ENCODE measurements at regions of chr18 and their contacts with region 1.

Region 1: GRCh38 chr18:48475635-48476549 is 62.9 kb upstream of the CTIF start:
- DNase-seq: peak; percentile 83
- H3K4me3 ChIP-seq: no peak overlapping the region
- H3K27ac ChIP-seq: no peak overlapping the region
- H3K4me1 ChIP-seq: peaks cover 20% of the 10 kb centered on the region
- H3K27me3 ChIP-seq: no peaks in the 10 kb centered on the region

Region 2: GRCh38 chr18:48639772-48640432 is 164.0 kb after region 1 on chr18:
- in situ Hi-C with region 1: loop called (anchors 10 kb)
- DNase-seq: no peak
- H3K4me3 ChIP-seq: no peak overlapping the region
- H3K27ac ChIP-seq: no peak overlapping the region
- H3K4me1 ChIP-seq: peaks cover 14% of the 10 kb centered on the region
- H3K27me3 ChIP-seq: no peaks in the 10 kb centered on the region

Measured in GM23248 (cell line).